ENCODE measurements at regions of chr2 and their contacts with region 1.

Region 1: DNA sequence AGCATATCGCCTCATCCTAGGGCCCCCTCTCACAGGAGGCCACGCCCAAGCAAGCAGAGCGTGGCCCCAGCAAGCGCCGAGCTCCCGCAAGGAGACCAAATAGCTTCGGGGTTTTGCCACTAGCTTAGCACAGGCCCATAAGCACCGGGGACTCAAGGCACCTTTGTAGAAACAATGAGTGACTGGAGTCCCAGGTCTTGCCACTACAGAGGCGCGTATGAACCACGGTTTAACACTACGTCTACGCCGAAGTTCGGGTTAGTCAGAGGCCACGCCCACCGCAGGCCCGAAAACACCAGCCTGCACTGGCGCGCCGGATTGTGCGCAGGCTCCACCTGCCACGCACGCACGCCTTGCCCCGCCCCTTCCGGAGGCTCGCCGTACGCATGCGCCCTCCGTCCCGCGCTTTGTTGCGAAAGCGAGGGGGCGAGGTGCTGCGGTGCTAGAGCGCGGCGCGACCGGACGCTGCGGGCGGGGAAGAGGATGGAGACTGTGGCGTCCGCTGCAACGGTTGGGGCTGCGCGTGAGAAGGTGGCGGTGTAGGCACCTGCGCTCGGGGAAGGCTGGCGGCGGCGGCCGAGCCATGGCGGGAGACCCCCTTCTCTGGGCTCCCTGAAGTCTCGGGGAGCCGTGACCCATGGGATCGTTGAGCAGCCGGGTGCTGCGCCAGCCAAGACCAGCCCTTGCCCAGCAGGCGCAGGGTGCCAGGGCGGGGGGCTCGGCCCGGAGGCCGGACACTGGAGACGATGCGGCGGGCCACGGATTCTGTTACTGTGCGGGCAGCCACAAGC is at the start of gene GMCL1:
- DNase-seq: peak; percentile 99 to 100
- ATAC-seq: peak; percentile 92 to 98 (median 92)
- H3K4me3 ChIP-seq: peak within 1 kb of the TSS; percentile 73
- H3K4me3 Mint-ChIP-seq: peak within 1 kb of the TSS; percentile 99
- H3K27ac ChIP-seq: peak within 1 kb of the TSS; percentile 84
- H3K27ac Mint-ChIP-seq: peak within 1 kb of the TSS; percentile 81 to 99
- H3K4me1 ChIP-seq: peaks cover 27% of the 10 kb centered on the region
- H3K4me1 Mint-ChIP-seq: peaks cover 40 to 48% of the 10 kb centered on the region in 2 donors
- H3K27me3 ChIP-seq: no peaks in the 10 kb centered on the region
- H3K27me3 Mint-ChIP-seq: no peaks in the 10 kb centered on the region
- CTCF ChIP-seq: no peak
- total RNA-seq, gene GMCL1: 34.6 to 49.4 (median 35.9) TPM

Region 2: GRCh38 chr2:69436938-69437750 is 392.3 kb before region 1 on chr2 and contains the start of gene NFU1:
- intact Hi-C with region 1: loop called (anchors 10 kb)
- DNase-seq: peak; percentile 89 to 93
- ATAC-seq: peak; percentile 89 to 94 (median 89)
- H3K4me3 ChIP-seq: peak within 1 kb of the TSS; percentile 88
- H3K4me3 Mint-ChIP-seq: peak within 1 kb of the TSS; percentile 94
- H3K27ac ChIP-seq: peak within 1 kb of the TSS; percentile 90
- H3K27ac Mint-ChIP-seq: peak within 1 kb of the TSS; percentile 96 to 98
- H3K4me1 ChIP-seq: peaks cover 20% of the 10 kb centered on the region
- H3K4me1 Mint-ChIP-seq: peaks cover 29 to 36% of the 10 kb centered on the region in 2 donors
- H3K27me3 ChIP-seq: no peaks in the 10 kb centered on the region
- H3K27me3 Mint-ChIP-seq: no peaks in the 10 kb centered on the region
- CTCF ChIP-seq: peak; percentile 28
- total RNA-seq, gene NFU1: 21.4 to 25.0 (median 23.6) TPM

Region 3: GRCh38 chr2:69770193-69771146 is 59.0 kb before region 1 on chr2:
- intact Hi-C with region 1: loop called (anchors 1 kb)
- DNase-seq: peak; percentile 44
- ATAC-seq: peak; percentile 54 to 75 (median 70)
- H3K4me3 ChIP-seq: no peak overlapping the region
- H3K4me3 Mint-ChIP-seq: peak overlapping the region; percentile 88
- H3K27ac ChIP-seq: peak overlapping the region; percentile 85
- H3K27ac Mint-ChIP-seq: peak overlapping the region; percentile 70 to 93
- H3K4me1 ChIP-seq: peaks cover 61% of the 10 kb centered on the region
- H3K4me1 Mint-ChIP-seq: peaks cover 81 to 85% of the 10 kb centered on the region in 2 donors
- H3K27me3 ChIP-seq: no peaks in the 10 kb centered on the region
- H3K27me3 Mint-ChIP-seq: no peaks in the 10 kb centered on the region
- CTCF ChIP-seq: no peak

Region 4: GRCh38 chr2:69779258-69780001 is 50.0 kb before region 1 on chr2:
- intact Hi-C with region 1: loop called (anchors 1 kb)
- DNase-seq: no peak
- ATAC-seq: no peak
- H3K4me3 ChIP-seq: no peak overlapping the region
- H3K4me3 Mint-ChIP-seq: no peak overlapping the region
- H3K27ac ChIP-seq: no peak overlapping the region
- H3K27ac Mint-ChIP-seq: no peak overlapping the region
- H3K4me1 ChIP-seq: peaks cover 21% of the 10 kb centered on the region
- H3K4me1 Mint-ChIP-seq: peaks cover 35 to 37% of the 10 kb centered on the region in 2 donors
- H3K27me3 ChIP-seq: no peaks in the 10 kb centered on the region
- H3K27me3 Mint-ChIP-seq: no peaks in the 10 kb centered on the region
- CTCF ChIP-seq: no peak

Region 5: GRCh38 chr2:70086838-70087701 is 257.6 kb after region 1 on chr2 and contains the start of gene PCBP1:
- intact Hi-C with region 1: loop called (anchors 5 kb)
- DNase-seq: peak; percentile 98
- ATAC-seq: peak; percentile 62 to 85 (median 71)
- H3K4me3 ChIP-seq: peak within 1 kb of the TSS; percentile 94
- H3K4me3 Mint-ChIP-seq: peak within 1 kb of the TSS; percentile 98
- H3K27ac ChIP-seq: peak within 1 kb of the TSS; percentile 98
- H3K27ac Mint-ChIP-seq: peak within 1 kb of the TSS; percentile 99 to 100
- H3K4me1 ChIP-seq: peaks cover 63% of the 10 kb centered on the region
- H3K4me1 Mint-ChIP-seq: peaks cover 79 to 81% of the 10 kb centered on the region in 2 donors
- H3K27me3 ChIP-seq: no peaks in the 10 kb centered on the region
- H3K27me3 Mint-ChIP-seq: no peaks in the 10 kb centered on the region
- CTCF ChIP-seq: no peak
- total RNA-seq, gene PCBP1: 329 to 358 (median 352) TPM

Measured in natural killer cell (primary cell).